ENCODE measurements at regions of chr7 and their contacts with region 1.

Region 1: GRCh38 chr7:141737834-141738591 is at the start of gene SSBP1:
- DNase-seq: peak; percentile 80 to 97
- ATAC-seq: peak; percentile 84 to 91 (median 86)
- H3K4me3 ChIP-seq: peak within 1 kb of the TSS; percentile 81
- H3K4me3 Mint-ChIP-seq: peak within 1 kb of the TSS; percentile 100
- H3K27ac ChIP-seq: peak within 1 kb of the TSS; percentile 96
- H3K27ac Mint-ChIP-seq: peak within 1 kb of the TSS; percentile 93 to 99
- H3K4me1 ChIP-seq: peaks cover 8% of the 10 kb centered on the region
- H3K4me1 Mint-ChIP-seq: peaks cover 39 to 47% of the 10 kb centered on the region in 2 donors
- H3K27me3 ChIP-seq: no peaks in the 10 kb centered on the region
- H3K27me3 Mint-ChIP-seq: no peaks in the 10 kb centered on the region
- CTCF ChIP-seq: peak; percentile 70
- total RNA-seq, gene SSBP1: 98.7 to 112 (median 106) TPM

Region 2: DNA sequence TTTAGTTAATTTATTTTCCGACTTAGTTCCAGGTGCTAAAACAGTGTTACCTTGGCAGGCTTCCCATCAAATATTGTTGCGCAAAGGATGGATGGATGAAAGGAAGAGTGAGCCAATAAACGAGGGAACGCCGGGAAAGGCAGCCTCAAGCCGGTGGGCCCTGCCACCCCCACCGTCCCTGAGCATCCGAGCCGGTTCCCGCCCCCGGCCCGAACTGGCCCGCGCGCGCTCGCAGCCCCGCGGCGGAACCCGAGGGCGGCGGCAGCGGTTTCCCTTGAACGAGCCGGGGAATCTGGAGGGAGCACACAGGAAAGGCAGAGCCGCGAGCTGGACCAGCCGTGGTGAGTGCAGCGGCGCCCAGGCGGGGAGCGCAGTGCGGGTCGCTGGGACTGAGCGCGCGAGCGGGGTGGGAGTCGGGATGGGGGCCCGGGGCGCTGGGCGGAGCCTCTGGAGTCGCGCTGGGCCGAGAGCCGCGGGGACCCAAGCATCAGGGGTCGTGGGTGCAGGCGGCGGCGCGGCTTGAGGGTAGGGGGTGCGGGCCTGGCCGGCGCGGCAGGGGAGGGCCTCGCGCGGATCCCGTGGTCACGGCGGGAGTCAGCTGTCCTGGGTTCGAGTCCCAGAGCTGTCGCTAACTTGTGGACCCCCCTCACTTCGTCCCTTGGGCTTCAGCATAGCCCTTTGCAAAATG is 186.8 kb before region 1 on chr7 and contains the start of gene AGK:
- intact Hi-C with region 1: loop called (anchors 5 kb)
- DNase-seq: peak; percentile 75 to 83
- ATAC-seq: peak; percentile 91 to 98 (median 97)
- H3K4me3 ChIP-seq: peak within 1 kb of the TSS; percentile 51
- H3K4me3 Mint-ChIP-seq: peak within 1 kb of the TSS; percentile 88
- H3K27ac ChIP-seq: peak within 1 kb of the TSS; percentile 65
- H3K27ac Mint-ChIP-seq: peak within 1 kb of the TSS; percentile 82 to 89
- H3K4me1 ChIP-seq: peaks cover 23% of the 10 kb centered on the region
- H3K4me1 Mint-ChIP-seq: peaks cover 44 to 46% of the 10 kb centered on the region in 2 donors
- H3K27me3 ChIP-seq: no peaks in the 10 kb centered on the region
- H3K27me3 Mint-ChIP-seq: no peaks in the 10 kb centered on the region
- CTCF ChIP-seq: no peak
- total RNA-seq, gene AGK: 70.0 to 106 (median 99.0) TPM

Measured in natural killer cell (primary cell).